ENCODE measurements at regions of chr3 and their contacts with region 1.

Region 1: GRCh38 chr3:195894780-195895607 is 13.4 kb downstream of the TNK2 start:
- DNase-seq: peak; percentile 55 to 74 (median 69)
- H3K4me3 ChIP-seq: peak overlapping the region; percentile 64
- H3K4me3 Mint-ChIP-seq: peak overlapping the region; percentile 88 to 94 (median 92)
- H3K27ac ChIP-seq: peak overlapping the region; percentile 84
- H3K27ac Mint-ChIP-seq: peak overlapping the region; percentile 87 to 98 (median 92)
- H3K4me1 ChIP-seq: peaks cover 39% of the 10 kb centered on the region
- H3K4me1 Mint-ChIP-seq: peaks cover 28 to 55% (median 39%) of the 10 kb centered on the region in 3 donors
- H3K27me3 ChIP-seq: no peaks in the 10 kb centered on the region
- H3K27me3 Mint-ChIP-seq: no peaks in the 10 kb centered on the region

Region 2: DNA sequence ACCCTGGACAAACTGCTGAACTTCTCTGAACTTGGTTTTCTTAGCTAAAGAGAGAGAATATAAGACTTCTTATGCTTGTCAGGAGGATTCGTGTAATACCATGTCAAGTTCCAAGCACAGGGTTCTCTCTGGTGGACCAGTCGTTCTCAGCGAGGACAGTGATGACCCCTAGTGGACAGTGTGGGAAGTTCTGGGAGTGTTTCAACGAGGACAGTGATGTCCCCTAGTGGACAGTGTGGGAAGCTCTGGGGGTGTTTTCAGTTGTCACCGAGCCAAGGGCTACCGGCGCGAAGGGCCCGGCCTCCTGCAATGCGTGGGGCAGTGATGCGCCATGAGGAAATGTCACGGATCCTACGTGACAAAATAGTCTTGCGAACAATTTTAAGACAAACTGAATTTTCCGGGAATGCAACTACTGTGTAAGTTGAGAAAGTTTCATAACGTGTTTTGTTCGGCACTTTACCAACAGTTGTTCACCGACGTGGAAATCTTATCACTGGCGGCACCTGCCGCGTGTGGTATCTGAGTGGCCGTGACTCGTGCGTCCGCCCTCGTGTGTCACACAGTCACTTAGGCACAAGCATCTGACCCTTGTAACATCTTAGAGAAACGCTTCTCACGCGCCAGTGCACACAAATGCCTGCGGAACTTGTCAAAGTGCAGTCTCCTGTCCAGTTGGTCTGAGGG is 44.0 kb before region 1 on chr3:
- CTCF ChIA-PET with region 1: interaction called, 20 read pairs
- POLR2A ChIA-PET with region 1: no interaction called
- DNase-seq: peak; percentile 79 to 91 (median 81)
- H3K4me3 ChIP-seq: no peak overlapping the region
- H3K4me3 Mint-ChIP-seq: peak overlapping the region in 4 of 7 donors; percentile 8 to 44 (median 28)
- H3K27ac ChIP-seq: no peak overlapping the region
- H3K27ac Mint-ChIP-seq: peak overlapping the region in 1 of 8 donors; percentile 29
- H3K4me1 ChIP-seq: peaks cover 6% of the 10 kb centered on the region
- H3K4me1 Mint-ChIP-seq: peaks cover 9 to 17% (median 9%) of the 10 kb centered on the region in 3 donors
- H3K27me3 ChIP-seq: no peaks in the 10 kb centered on the region
- H3K27me3 Mint-ChIP-seq: peaks cover 2 to 11% of the 10 kb centered on the region in 2 donors

Region 3: DNA sequence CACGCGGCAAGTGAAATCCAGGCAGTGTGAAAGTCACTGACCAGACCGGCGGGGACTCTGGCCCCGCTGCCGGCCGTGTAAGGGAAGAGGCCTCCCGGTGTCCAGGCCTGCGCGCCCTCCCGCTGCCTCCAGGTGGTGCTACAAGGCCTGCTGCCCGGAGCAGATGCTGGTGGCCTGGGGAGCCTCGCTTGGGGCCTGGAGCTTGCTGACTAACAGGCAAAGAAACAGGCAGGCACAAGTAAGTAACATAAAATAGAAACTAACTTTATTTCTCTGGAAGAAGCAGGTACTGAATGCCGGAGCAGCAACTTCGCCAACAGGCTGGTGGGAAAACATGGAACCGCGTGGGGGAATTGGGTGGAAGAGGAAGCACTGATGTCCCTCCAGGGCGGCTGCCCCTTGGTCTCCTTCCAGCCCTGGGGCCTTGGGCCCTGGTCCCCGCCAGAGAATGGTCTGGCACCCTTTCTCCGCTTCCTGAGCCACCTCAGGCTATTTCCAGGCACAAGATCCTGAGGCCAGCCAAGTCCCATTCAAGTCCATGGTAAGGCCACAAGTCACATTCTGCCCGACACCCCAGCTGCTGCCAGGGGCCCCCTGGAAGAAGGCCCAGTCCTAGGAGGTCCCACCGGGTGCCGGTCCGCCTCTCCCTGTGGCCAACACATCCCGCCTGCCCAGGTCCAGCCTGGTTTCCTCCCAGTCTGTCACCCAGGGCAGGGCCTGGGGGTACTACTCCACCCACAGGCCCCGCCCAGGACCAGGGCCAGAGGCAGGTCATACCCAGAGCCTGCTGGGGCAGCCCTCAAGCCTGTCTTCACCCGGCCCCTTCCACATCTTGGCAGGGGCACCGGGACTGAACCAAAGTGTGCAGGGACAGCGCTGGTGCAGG is 31.6 kb before region 1 on chr3:
- CTCF ChIA-PET with region 1: interaction called, 68 read pairs
- POLR2A ChIA-PET with region 1: no interaction called
- DNase-seq: peak; percentile 34 to 72 (median 44)
- H3K4me3 ChIP-seq: no peak overlapping the region
- H3K4me3 Mint-ChIP-seq: no peak overlapping the region
- H3K27ac ChIP-seq: no peak overlapping the region
- H3K27ac Mint-ChIP-seq: peak overlapping the region in 4 of 8 donors; percentile 38 to 79 (median 50)
- H3K4me1 ChIP-seq: peaks cover 8% of the 10 kb centered on the region
- H3K4me1 Mint-ChIP-seq: peaks cover 4 to 7% (median 4%) of the 10 kb centered on the region in 3 donors
- H3K27me3 ChIP-seq: no peaks in the 10 kb centered on the region
- H3K27me3 Mint-ChIP-seq: no peaks in the 10 kb centered on the region

Region 4: GRCh38 chr3:195876297-195877031 is 18.5 kb before region 1 on chr3:
- CTCF ChIA-PET with region 1: interaction called, 12 read pairs
- POLR2A ChIA-PET with region 1: no interaction called
- DNase-seq: peak in 1 of 5 donors; percentile 13
- H3K4me3 ChIP-seq: no peak overlapping the region
- H3K4me3 Mint-ChIP-seq: peak overlapping the region in 1 of 7 donors; percentile 56
- H3K27ac ChIP-seq: no peak overlapping the region
- H3K27ac Mint-ChIP-seq: peak overlapping the region in 5 of 8 donors; percentile 12 to 80 (median 73)
- H3K4me1 ChIP-seq: no peaks in the 10 kb centered on the region
- H3K4me1 Mint-ChIP-seq: no peaks in the 10 kb centered on the region
- H3K27me3 ChIP-seq: no peaks in the 10 kb centered on the region
- H3K27me3 Mint-ChIP-seq: no peaks in the 10 kb centered on the region

Region 5: DNA sequence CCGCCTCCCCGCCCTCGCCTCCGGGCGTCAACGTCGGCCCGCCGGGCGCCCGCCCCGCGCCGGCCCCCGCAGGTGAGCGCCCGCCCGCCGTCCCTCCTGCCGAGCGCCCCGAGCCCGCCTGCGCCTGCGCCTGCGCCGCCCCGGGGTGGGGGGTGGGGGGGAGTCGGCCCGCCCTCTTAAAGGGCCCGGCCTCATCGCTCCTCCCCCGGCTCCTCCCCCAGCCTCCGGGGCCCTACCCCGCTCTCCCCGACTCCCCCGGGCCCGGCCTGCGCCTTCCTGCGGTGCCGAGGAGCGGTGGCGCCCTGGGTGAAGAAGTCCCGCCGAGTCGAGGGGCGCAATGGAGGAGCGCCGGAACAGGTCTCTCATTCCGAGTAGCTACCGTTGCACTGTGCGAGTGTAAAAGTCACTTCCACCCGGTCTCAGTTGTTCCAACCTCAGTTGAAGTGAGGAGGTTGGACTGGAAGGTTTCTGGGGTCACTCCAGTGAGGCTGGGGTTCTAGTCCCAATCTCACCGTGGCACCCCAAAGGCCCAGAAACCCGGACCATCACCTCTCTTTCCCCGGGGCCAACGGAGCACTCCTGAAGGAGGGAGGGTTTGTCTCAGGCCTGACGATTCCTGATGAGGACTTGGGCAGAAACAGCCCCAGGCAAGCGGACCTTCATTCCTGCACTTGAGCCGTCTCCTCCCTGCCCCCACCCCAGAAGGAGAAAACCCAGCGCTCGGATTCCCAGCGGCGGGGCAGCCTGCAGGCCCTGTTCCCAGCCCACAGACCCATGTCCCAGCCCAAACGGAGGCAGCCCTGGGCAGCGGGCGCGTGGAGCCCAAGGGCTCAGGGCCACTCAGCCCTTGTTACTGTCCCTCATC is 14.9 kb after region 1 on chr3:
- CTCF ChIA-PET with region 1: interaction called, 176 read pairs
- POLR2A ChIA-PET with region 1: interaction called, 77 read pairs
- DNase-seq: peak; percentile 84 to 92 (median 86)
- H3K4me3 ChIP-seq: peak overlapping the region; percentile 54
- H3K4me3 Mint-ChIP-seq: peak overlapping the region; percentile 58 to 91 (median 72)
- H3K27ac ChIP-seq: peak overlapping the region; percentile 64
- H3K27ac Mint-ChIP-seq: peak overlapping the region in 6 of 8 donors; percentile 36 to 89 (median 72)
- H3K4me1 ChIP-seq: peaks cover 41% of the 10 kb centered on the region
- H3K4me1 Mint-ChIP-seq: peaks cover 33 to 47% (median 39%) of the 10 kb centered on the region in 3 donors
- H3K27me3 ChIP-seq: no peaks in the 10 kb centered on the region
- H3K27me3 Mint-ChIP-seq: peaks cover 0 to 3% of the 10 kb centered on the region in 2 donors

Region 6: DNA sequence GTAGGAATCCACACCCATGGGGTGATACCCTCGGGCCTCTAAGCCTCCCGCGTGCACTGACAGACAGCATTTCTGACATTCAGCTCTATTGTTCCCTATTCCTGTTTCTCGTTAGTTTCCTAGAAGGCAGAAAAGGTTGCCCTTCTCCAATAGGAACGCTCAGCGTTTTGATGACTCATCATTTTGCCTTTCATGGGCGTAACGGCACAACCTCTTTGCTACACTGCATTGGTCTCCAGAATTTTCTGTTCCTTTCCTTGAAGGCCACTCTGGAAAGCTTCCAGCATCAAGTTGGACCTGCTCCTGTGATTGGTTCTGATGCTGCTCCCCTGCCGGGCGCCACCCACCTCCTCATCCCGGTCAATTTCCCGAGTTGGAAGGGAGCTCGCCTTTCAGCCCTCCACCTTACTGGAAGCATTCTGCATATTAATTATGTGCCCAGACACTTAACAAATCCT is 26.4 kb after region 1 on chr3:
- CTCF ChIA-PET with region 1: interaction called, 176 read pairs
- POLR2A ChIA-PET with region 1: no interaction called
- DNase-seq: no peak
- H3K4me3 ChIP-seq: no peak overlapping the region
- H3K4me3 Mint-ChIP-seq: no peak overlapping the region
- H3K27ac ChIP-seq: no peak overlapping the region
- H3K27ac Mint-ChIP-seq: no peak overlapping the region
- H3K4me1 ChIP-seq: peaks cover 4% of the 10 kb centered on the region
- H3K4me1 Mint-ChIP-seq: peaks cover 0 to 9% (median 0%) of the 10 kb centered on the region in 3 donors
- H3K27me3 ChIP-seq: no peaks in the 10 kb centered on the region
- H3K27me3 Mint-ChIP-seq: peaks cover 5 to 9% of the 10 kb centered on the region in 2 donors

Measured in CD8-positive, alpha-beta memory T cell (primary cell).